Common myeloid progenitor, CD34-positive (primary cell): ENCODE measurements at regions of chr20 and their contacts with region 1.

Region 1: DNA sequence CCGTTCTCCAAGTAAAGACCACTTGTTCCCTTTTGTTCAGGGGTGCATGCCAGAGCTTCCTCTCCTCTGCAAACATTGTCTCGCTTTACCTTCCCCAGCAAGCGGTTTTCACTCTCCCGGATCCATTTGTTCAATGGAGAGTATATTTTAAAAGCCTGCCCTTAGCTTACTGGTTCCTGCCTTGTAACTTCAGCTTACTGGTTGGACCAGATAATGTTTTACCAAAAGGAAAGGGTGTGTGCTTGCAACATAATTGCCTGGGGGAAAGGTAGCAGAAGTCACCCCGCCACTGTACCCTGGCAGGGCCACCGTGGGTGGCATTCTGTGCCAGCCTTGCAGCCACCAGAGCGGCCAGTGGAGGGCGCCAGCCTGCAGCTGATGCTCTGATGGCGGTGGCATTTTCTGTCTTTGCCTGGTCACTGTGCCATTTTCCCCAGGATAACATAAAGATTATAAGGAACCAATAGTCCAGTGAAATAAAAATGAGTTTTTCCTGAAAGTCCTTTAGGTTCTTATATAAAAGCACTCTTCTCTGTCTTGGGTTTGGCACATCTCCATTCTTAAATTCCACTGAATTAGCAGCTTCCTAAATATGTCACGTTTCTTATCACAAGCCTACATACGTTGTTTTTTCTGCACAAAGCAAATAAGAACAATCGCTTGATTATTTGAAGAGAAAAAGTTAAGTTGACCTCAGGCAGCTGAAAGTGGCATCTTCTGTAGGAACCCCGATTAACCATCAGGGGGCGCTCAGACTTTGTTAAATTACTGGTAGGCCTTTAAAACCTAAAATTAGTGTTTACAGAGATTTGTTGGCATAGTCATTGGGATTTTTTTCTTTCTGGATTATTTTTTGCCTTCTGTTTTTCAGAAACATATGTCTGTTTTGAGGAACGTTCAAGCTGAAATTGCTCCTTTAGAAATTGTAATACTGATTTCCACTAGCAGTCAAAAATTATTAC is 67.4 kb upstream of the XRN2 start:
- DNase-seq: peak; percentile 69 to 83 (median 79)
- H3K4me3 ChIP-seq: no peak overlapping the region
- H3K27ac ChIP-seq: no peak overlapping the region
- H3K4me1 ChIP-seq: peaks cover 0 to 2% (median 0%) of the 10 kb centered on the region in 4 experiments
- H3K27me3 ChIP-seq: no peaks in the 10 kb centered on the region

Region 2: GRCh38 chr20:20837574-20838021 is 398.2 kb before region 1 on chr20:
- CTCF ChIA-PET with region 1: interaction called, 13 read pairs
- POLR2A ChIA-PET with region 1: no interaction called
- DNase-seq: peak; percentile 67 to 81 (median 77)
- H3K4me3 ChIP-seq: peak overlapping the region in 1 of 7 experiments; percentile 36
- H3K27ac ChIP-seq: no peak overlapping the region
- H3K4me1 ChIP-seq: peaks cover 0 to 2% (median 1%) of the 10 kb centered on the region in 4 experiments
- H3K27me3 ChIP-seq: peaks cover 0 to 41% (median 9%) of the 10 kb centered on the region in 5 experiments

Region 3: DNA sequence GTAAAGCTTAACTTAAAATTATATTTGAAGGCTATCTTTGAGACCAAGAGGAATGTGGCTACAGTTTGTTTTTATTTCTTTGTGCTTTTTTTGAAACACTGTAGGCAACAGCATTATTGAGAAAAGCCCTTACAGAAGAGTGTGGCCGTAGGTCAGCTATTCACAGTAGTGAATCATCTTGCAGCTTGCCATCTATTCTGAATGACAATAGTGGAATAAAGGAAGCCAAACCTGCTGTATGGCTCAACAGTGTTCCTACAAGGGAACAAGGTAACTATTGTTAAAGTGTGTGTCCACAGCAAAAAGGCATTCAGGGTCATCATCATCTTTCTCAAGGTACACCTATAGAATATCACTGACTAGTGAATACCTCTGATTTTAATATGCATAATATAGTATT is 21.3 kb before region 1 on chr20:
- CTCF ChIA-PET with region 1: interaction called, 10 read pairs
- POLR2A ChIA-PET with region 1: no interaction called
- DNase-seq: no peak
- H3K4me3 ChIP-seq: no peak overlapping the region
- H3K27ac ChIP-seq: no peak overlapping the region
- H3K4me1 ChIP-seq: no peaks in the 10 kb centered on the region
- H3K27me3 ChIP-seq: no peaks in the 10 kb centered on the region

Region 4: DNA sequence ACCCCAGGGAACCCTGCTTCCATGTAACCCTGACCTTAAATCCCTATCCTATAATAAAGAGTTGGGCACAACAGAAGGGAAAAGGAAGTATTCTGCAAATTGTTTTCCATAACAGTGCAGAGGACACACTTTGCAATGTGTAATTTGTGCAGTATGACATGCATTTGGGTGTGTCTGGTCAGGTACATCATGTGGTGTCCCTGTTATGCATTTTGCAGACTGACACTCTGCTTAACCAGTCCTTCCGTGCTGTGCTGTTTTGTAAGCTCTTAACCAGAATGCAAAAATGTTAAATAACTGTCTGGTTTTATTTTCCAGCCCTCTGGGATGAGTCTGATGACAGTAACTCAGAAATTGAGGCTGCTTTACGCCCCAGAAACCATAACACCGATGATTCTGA is 10.4 kb after region 1 on chr20:
- CTCF ChIA-PET with region 1: interaction called, 18 read pairs
- POLR2A ChIA-PET with region 1: no interaction called
- DNase-seq: no peak
- H3K4me3 ChIP-seq: no peak overlapping the region
- H3K27ac ChIP-seq: no peak overlapping the region
- H3K4me1 ChIP-seq: no peaks in the 10 kb centered on the region
- H3K27me3 ChIP-seq: peaks cover 0 to 4% (median 0%) of the 10 kb centered on the region in 5 experiments

Region 5: DNA sequence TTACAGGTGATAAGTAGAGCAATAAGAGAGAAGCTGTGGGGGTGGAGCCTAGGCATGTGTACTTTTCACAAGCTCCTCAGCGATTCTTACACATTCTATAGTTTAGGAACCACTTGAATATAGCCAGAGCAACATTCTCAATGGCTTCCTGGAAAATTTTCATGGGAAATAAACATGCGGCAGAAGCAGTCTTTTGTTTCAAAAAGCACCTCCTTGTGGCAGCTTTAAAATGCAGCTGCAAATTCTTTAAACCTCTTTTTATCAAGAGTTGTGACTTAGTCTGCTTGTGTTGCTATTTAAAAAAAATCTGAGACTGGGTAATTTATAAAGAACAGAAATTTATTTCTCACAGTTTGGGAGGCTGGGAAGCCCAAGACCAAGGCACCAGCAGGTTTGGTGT is 254.3 kb after region 1 on chr20:
- CTCF ChIA-PET with region 1: interaction called, 14 read pairs
- POLR2A ChIA-PET with region 1: no interaction called
- DNase-seq: no peak
- H3K4me3 ChIP-seq: no peak overlapping the region
- H3K27ac ChIP-seq: no peak overlapping the region
- H3K4me1 ChIP-seq: no peaks in the 10 kb centered on the region
- H3K27me3 ChIP-seq: peaks cover 4 to 52% (median 13%) of the 10 kb centered on the region in 5 experiments

Region 6: DNA sequence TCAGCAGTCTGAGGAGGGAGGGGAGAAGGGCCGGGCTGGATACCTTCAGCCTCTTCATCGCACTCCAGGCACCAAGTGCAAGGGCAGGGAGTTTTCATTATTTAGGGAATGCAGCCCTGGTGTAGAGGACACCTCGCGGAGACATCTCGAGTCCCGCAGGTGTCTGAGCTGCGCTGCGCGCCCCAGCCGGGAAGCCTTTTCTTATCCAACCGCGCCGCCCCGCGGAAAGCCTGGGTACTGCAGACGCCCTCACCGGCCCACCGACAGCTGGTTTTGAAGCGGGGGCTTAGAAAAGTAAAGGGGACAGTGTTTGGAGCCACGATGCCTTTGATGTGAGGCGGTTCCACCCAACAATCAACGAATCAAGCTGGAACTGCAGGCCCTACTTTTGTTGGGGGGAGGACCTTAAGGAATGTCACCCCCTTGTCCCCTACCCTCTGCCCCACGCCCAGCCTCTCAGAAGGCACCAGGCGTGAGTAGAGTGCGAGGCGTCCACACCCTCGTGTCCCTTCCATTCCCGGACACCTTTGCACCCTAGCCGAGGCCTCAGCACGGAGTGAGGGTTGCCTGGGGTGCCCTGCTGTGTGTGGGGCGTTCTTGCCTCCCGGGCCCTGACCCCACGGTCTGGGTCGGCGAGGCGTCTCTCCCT is 269.5 kb after region 1 on chr20:
- CTCF ChIA-PET with region 1: interaction called, 49 read pairs
- POLR2A ChIA-PET with region 1: no interaction called
- DNase-seq: peak; percentile 46 to 72 (median 65)
- H3K4me3 ChIP-seq: peak overlapping the region in 4 of 7 experiments; percentile 37 to 57 (median 46)
- H3K27ac ChIP-seq: no peak overlapping the region
- H3K4me1 ChIP-seq: peaks cover 0 to 22% (median 18%) of the 10 kb centered on the region in 4 experiments
- H3K27me3 ChIP-seq: peaks cover 5 to 98% (median 50%) of the 10 kb centered on the region in 5 experiments